GM10248 (cell line): ENCODE measurements at regions of chr1 and their contacts with region 1.

Region 1: DNA sequence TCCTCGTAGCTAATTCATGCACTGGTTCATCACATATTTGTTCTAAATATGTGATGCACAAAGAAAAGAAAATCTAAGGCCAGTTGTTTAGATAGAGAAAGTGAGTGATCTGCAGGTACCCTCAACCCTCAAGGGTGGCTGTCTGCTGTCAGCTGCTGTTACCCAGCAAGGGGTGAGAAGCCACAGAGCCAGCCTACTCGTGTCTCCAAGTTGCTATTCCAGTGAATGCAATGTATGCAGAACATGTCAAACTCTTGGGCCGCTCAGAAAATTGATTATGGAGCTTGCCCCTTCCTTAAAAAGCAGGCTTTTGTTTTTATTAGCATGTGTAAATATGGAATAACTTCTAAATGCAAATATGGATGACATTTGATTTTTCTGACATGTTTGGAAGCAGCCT is 336.3 kb upstream of the ST6GALNAC5 start:
- DNase-seq: no peak
- CTCF ChIP-seq: no peak

Region 2: DNA sequence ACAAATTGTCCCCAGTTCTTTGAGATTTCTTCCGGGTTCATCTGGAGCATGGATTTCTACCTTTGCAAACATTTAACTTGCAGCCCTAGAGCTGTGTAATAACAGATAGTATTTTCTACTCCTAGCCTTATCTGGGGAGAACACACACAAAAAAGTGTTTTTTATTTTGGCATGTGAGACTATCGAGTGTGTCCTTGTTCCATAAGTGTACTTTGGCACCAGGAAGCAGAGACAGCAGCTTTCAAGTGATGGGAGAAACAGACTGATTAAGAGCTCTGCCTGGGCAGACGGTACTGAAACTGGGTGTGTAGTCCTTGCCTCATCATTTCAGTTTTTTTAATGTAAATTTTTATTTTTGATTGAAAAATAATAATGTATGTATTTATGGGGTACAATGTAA is 159.0 kb before region 1 on chr1:
- CTCF ChIA-PET with region 1: no interaction called
- POLR2A ChIA-PET with region 1: no interaction called
- DNase-seq: no peak
- CTCF ChIP-seq: no peak

Region 3: GRCh38 chr1:76542359-76542758 is 11.4 kb after region 1 on chr1:
- CTCF ChIA-PET with region 1: interaction called, 12 read pairs
- POLR2A ChIA-PET with region 1: no interaction called
- DNase-seq: no peak
- CTCF ChIP-seq: no peak